BJ (cell line): ENCODE measurements at regions of chr1 and their contacts with region 1.

Region 1: DNA sequence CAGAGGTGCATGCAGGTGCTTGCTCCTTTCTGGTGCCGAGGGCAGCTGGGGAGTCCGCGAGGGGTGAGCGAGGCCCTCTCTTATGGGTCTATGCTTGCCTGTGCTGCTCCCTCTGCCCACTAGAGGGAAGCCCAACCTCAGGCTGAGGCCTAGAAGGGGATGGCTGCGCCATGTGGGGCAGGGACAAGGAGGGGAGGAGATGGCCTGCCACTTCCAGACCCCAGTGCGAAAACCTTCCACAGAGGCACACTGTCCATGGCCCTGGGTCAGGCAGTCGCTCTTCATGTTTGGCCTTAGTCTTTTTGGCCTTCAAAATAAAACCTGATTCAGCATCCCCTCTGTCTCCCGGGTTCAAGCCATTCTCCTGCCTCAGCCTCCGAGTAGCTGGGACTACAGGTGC is 14.0 kb downstream of the RHBG start:
- DNase-seq: no peak
- H3K4me3 ChIP-seq: no peak overlapping the region
- H3K27me3 ChIP-seq: peaks cover 12% of the 10 kb centered on the region
- CTCF ChIP-seq: peak; percentile 93

Region 2: DNA sequence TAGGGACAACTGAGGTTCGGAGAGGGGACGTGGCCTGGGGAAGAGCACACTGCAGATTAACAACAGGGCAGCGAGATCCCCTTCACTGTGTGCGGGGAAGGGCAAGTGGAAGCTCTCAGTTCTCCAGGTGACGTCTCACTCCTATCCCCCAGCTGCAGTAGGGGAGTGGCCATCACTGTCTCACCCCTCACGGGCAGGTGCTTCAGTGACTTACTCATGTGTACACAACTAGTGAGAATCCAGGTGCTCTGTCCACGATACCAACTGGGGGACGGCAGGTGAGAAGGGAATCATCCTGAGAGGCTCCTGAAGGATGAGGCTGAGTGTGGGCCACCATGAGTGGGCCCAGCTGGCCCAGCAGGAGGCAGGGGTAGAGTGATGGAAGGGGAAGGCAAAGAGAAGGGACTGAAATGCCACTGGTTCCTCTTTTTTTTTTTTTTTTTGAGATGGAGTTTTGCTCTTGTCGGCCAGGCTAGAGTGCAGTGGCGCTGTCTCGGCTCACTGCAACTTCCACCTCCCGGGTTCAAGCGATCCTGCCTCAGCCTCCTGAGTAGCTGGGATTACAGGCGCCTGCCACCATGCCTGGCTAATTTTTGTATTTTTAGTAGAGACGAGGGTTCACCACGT is 11.9 kb after region 1 on chr1:
- CTCF ChIA-PET with region 1: interaction called, 39 read pairs
- POLR2A ChIA-PET with region 1: no interaction called
- DNase-seq: no peak
- H3K4me3 ChIP-seq: no peak overlapping the region
- H3K27me3 ChIP-seq: peaks cover 18% of the 10 kb centered on the region
- CTCF ChIP-seq: no peak

Region 3: DNA sequence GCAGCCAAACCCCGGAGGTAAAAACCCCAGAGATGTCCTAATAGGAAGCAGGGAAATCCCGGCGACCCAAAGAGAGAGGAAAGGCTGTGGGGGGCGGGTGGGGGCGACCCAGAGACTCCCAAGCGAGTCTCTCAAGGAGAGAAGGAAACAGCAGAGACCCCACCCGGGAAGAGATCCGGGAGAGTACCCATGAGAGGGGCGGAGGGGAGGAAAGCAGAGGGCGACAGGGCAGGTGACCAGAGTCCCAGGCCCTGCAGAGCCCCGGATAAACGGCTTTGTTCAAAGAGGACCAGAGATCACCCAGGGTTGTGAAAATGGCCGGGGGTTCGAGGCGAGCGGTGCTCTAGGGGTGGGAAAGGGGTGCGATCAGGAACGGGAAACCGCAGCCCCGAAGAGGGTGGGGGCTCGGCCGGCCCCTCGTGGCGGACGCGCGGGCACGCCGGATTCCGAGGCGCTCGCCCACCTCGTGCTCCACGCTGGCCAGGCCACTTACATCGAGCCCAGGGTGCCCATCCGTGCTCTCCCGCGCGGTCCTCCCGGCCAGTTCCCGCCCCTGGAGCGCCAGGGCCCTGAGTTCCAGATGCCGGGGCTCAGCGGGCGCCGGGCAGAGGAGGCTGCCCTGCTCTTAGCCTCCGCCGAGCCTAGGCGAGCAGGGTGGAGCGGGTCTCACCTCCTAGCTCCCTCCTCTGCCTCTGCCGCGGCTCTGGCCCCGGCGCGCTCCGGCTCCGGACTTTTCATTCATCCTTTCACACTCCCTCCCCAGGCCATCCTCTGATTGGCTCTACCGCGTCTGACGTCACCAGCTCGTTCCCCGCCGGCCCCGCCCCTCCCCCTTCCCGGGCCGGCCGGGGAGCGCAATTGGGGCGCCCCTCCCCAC is 38.3 kb after region 1 on chr1:
- CTCF ChIA-PET with region 1: interaction called, 13 read pairs
- POLR2A ChIA-PET with region 1: no interaction called
- DNase-seq: no peak
- H3K4me3 ChIP-seq: no peak overlapping the region; the same call in 1 of the 2 replicates
- H3K27me3 ChIP-seq: peaks cover 69% of the 10 kb centered on the region
- CTCF ChIP-seq: no peak

Region 4: DNA sequence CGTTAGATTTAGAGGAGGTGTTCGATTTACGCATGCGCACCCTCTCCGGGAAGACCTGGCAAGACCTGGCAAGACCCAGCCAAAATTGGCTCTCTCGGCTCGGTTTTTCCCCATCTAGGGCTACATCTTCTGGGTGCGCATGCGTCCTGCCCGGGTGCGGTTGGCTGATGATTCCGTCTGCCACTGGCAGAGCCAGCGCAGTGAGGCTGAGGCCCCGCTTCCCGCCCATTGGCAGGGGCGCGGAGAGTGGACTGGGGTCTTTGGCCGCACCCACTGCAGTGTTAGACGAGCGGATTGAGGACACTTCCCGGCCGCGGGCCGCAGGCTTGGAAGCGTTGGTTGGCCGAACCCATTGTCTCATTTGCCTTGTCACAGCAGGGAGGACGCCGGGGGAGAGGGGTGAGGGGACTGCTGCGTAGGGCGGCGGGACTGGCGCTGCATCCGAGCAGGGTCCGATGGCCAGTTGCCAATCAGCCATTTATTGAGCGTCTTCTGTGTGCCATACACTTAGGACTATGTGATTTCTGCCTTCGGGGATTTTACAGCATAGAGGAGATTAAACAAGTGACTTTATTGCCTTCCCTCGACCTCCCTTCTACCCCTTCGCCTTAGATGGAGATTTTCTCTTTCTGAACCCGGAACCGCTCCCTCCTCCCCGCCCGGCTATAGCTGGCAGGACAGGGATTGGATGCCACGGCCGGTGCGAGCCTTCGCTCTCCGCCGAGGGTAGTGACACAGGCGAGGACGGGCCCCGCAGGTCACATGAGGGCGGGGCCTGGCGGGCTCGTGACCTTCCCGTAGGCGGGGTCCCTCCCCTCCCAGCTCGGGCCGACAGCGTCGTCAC is 73.8 kb after region 1 on chr1:
- CTCF ChIA-PET with region 1: interaction called, 43 read pairs
- POLR2A ChIA-PET with region 1: no interaction called
- DNase-seq: peak; percentile 89
- H3K4me3 ChIP-seq: peak overlapping the region; percentile 47
- H3K27me3 ChIP-seq: peaks cover under 1% of the 10 kb centered on the region; the same call in 1 of the 2 replicates
- CTCF ChIP-seq: no peak

Region 5: DNA sequence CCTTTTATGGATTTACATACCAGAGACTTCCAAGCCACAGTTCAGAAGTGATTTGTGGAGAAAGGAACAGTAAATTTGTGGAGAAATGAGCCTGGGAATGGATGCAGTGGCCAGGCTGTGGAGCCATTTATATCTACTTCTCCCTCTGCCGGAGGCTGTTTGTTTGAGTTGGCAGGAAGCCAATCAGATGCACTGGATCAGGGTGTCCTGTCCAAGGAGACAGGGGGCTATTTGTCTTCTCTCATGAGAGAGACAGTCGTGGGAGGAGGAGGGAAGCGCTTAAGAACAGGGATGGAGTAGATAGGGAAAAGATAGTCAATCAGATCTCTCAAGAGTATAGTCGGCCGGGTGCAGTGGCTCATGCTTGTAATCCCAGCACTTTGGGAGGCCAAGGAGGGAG is 233.4 kb after region 1 on chr1:
- CTCF ChIA-PET with region 1: interaction called, 103 read pairs
- POLR2A ChIA-PET with region 1: no interaction called
- DNase-seq: no peak
- H3K4me3 ChIP-seq: no peak overlapping the region
- H3K27me3 ChIP-seq: peaks cover 31% of the 10 kb centered on the region
- CTCF ChIP-seq: no peak